ENCODE measurements at regions of chr18 and their contacts with region 1.

Region 1: DNA sequence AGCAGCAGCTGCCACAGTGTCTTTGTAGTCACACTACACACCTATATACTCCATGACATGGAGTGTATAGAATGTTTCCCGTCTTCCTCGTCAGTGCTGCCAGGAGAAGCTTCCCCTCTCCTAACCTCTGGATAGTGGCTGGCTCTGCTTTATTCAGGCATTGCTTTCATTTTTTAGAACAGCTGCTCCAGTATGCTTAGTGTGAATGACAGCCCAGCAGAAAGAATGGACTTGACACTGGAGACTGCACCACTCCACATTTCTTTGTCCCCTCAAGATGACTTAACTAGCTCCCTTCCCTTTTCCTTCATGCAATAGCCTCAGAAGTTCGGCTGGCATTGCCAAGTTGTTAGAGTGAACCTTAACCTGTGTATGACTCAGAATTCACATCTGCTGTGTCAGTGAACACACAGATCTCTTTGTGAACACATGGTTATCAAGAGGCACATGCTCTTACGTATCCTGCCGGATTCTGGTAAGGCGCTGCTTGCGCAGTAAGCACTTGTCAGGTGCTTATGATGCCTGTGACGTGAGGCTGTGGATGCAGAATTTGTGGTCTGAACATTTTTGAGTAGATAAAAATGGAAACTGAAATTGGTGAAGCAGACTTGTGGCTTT is 73.9 kb downstream of the NEDD4L start:
- DNase-seq: peak in 2 of 3 donors; percentile 49 to 56
- ATAC-seq: peak; percentile 81 to 93
- H3K4me3 ChIP-seq: no peak overlapping the region
- H3K27ac ChIP-seq: peak overlapping the region; percentile 26
- H3K4me1 ChIP-seq: no peaks in the 10 kb centered on the region
- H3K27me3 ChIP-seq: no peaks in the 10 kb centered on the region

Region 2: DNA sequence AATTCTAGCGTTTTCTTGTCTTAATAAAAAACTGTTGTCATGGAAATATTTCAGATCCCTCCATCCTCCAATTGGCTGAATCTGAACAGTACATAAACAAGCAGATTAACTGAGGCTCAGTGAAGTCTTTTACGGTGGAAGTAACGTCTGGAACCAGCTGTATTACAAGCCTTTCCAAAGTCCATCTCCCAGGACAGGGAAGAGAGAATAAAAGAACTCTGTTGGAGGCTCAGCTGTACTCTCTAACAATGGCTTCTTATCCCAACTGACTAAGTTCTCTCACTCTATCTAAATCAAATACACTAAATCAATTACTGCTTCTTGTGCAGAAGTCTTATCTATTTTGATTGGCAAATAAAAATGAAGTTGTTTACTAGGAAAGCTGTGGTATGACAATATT is 93.8 kb before region 1 on chr18:
- intact Hi-C with region 1: no loop called
- DNase-seq: no peak
- ATAC-seq: no peak
- H3K4me3 ChIP-seq: no peak overlapping the region
- H3K27ac ChIP-seq: no peak overlapping the region
- H3K4me1 ChIP-seq: no peaks in the 10 kb centered on the region
- H3K27me3 ChIP-seq: no peaks in the 10 kb centered on the region

Region 3: DNA sequence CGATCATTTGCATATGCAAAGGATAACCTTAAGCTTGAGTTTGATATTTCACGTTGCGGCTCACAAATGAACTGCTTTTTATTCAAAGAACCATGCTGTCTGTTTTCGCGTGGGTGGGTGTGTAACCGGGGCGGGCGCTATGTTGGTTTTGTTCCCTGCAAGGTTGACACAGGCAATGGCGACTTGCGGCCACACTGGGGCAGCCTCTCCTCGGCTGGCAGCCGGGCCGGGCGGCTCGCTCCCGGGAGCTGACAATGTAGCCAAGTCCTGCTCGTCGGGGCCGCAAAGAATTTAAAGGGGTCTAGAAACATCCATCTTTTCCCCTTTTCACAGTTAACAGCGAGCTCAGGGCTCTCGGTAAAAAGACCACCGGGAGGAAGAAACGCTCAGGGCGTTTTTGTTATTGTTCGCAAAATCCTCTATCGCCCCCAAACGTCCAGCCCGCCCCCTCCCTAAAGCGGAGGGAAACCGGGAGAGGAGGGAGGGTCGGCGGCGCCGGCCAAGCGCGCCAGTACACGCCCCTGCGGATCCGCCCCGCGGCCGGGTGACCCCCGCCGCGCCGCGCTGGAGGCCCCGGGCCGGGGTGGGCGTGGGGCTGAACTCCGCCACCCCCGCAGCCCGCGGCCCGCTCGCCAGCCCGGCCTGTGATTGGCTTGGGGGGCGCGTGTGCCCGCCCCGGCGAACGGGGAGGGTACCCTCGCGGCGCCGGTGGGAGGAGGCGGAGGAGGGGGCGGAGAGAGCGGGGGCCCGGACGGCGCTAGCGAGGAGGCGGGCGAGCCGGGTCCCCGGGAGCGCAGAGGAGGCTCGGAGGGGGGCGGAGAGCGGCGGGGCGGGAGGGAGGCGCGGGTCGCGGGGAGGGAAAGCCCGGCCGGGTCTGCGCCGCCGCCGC is 74.2 kb before region 1 on chr18 and contains the start of gene NEDD4L:
- intact Hi-C with region 1: loop called (anchors 2 to 5 kb)
- DNase-seq: peak; percentile 85 to 93 (median 93)
- ATAC-seq: peak; percentile 92 to 94
- H3K4me3 ChIP-seq: peak within 1 kb of the TSS; percentile 92
- H3K27ac ChIP-seq: peak within 1 kb of the TSS; percentile 70
- H3K4me1 ChIP-seq: no peaks in the 10 kb centered on the region
- H3K27me3 ChIP-seq: no peaks in the 10 kb centered on the region
- total RNA-seq, gene NEDD4L: 72.6 to 87.5 (median 76.0) TPM